Activated CD8-positive, alpha-beta T cell treated with anti-CD3 and anti-CD28 coated beads for 36 hours (primary cell): ENCODE measurements at regions of chr1 and their contacts with region 1.

Region 1: GRCh38 chr1:26145041-26145959 is 13.6 kb upstream of the FAM110D start:
- DNase-seq: peak; percentile 91
- ATAC-seq: peak; percentile 92
- H3K4me3 Mint-ChIP-seq: no peak overlapping the region
- H3K27ac Mint-ChIP-seq: no peak overlapping the region
- H3K4me1 Mint-ChIP-seq: peaks cover 5% of the 10 kb centered on the region
- H3K27me3 Mint-ChIP-seq: no peaks in the 10 kb centered on the region
- CTCF ChIP-seq: peak; percentile 95

Region 2: GRCh38 chr1:26045722-26046248 is 99.5 kb before region 1 on chr1 and contains the start of gene SLC30A2:
- CTCF ChIA-PET with region 1: interaction called, 10 read pairs
- POLR2A ChIA-PET with region 1: no interaction called
- intact Hi-C with region 1: no loop called
- DNase-seq: no peak
- ATAC-seq: peak; percentile 42
- H3K4me3 Mint-ChIP-seq: no peak within 1 kb of the TSS
- H3K27ac Mint-ChIP-seq: no peak within 1 kb of the TSS
- H3K4me1 Mint-ChIP-seq: peaks cover 2% of the 10 kb centered on the region
- H3K27me3 Mint-ChIP-seq: peaks cover 54% of the 10 kb centered on the region
- CTCF ChIP-seq: no peak
- total RNA-seq, gene SLC30A2: not detected

Region 3: GRCh38 chr1:26111530-26112406 is 33.5 kb before region 1 on chr1 and contains the start of gene PDIK1L:
- CTCF ChIA-PET with region 1: interaction called, 38 read pairs
- POLR2A ChIA-PET with region 1: no interaction called
- intact Hi-C with region 1: no loop called
- DNase-seq: peak; percentile 93
- ATAC-seq: peak; percentile 89
- H3K4me3 Mint-ChIP-seq: peak within 1 kb of the TSS; percentile 96
- H3K27ac Mint-ChIP-seq: peak within 1 kb of the TSS; percentile 88
- H3K4me1 Mint-ChIP-seq: peaks cover 22% of the 10 kb centered on the region
- H3K27me3 Mint-ChIP-seq: no peaks in the 10 kb centered on the region
- CTCF ChIP-seq: no peak
- total RNA-seq, gene PDIK1L: 11.7 to 13.4 TPM

Region 4: GRCh38 chr1:26132128-26132833 is 13.0 kb before region 1 on chr1:
- CTCF ChIA-PET with region 1: interaction called, 164 read pairs
- POLR2A ChIA-PET with region 1: interaction called, 6 read pairs
- intact Hi-C with region 1: no loop called
- DNase-seq: no peak
- ATAC-seq: no peak
- H3K4me3 Mint-ChIP-seq: no peak overlapping the region
- H3K27ac Mint-ChIP-seq: no peak overlapping the region
- H3K4me1 Mint-ChIP-seq: peaks cover 14% of the 10 kb centered on the region
- H3K27me3 Mint-ChIP-seq: peaks cover 2% of the 10 kb centered on the region
- CTCF ChIP-seq: no peak

Region 5: GRCh38 chr1:26169669-26170471 is 24.6 kb after region 1 on chr1 and contains the start of gene ZNF593:
- CTCF ChIA-PET with region 1: interaction called, 15 read pairs
- POLR2A ChIA-PET with region 1: no interaction called
- intact Hi-C with region 1: no loop called
- DNase-seq: peak; percentile 92
- ATAC-seq: peak; percentile 97
- H3K4me3 Mint-ChIP-seq: peak within 1 kb of the TSS; percentile 91
- H3K27ac Mint-ChIP-seq: peak within 1 kb of the TSS; percentile 90
- H3K4me1 Mint-ChIP-seq: peaks cover 11% of the 10 kb centered on the region
- H3K27me3 Mint-ChIP-seq: peaks cover under 1% of the 10 kb centered on the region
- CTCF ChIP-seq: peak; percentile 84
- total RNA-seq, gene ZNF593: 40.9 to 41.1 TPM

Region 6: DNA sequence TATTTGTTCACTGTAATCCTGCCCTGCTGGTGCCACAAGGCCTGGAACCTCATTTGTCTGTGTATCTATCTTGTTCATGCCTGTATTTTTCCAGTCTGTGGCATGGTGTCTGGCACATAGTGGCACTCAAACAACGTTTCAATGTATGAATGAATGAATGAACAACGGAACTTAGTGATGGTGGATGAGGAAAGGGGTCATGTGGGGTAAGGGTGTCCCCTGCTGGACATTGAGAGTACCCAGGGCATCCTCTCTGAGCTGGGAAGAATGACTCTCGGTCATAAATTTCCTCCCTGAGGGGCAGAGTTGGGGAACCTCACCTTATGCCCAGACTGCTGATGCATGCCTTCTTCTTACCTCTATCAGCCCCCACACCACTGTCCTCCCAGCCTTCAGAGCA is 246.2 kb after region 1 on chr1:
- CTCF ChIA-PET with region 1: no interaction called
- POLR2A ChIA-PET with region 1: no interaction called
- intact Hi-C with region 1: no loop called
- DNase-seq: peak; percentile 71
- ATAC-seq: peak; percentile 69
- H3K4me3 Mint-ChIP-seq: no peak overlapping the region
- H3K27ac Mint-ChIP-seq: no peak overlapping the region
- H3K4me1 Mint-ChIP-seq: peaks cover 40% of the 10 kb centered on the region
- H3K27me3 Mint-ChIP-seq: no peaks in the 10 kb centered on the region
- CTCF ChIP-seq: peak; percentile 82